ENCODE measurements at regions of chr2 and their contacts with region 1.

Region 1: DNA sequence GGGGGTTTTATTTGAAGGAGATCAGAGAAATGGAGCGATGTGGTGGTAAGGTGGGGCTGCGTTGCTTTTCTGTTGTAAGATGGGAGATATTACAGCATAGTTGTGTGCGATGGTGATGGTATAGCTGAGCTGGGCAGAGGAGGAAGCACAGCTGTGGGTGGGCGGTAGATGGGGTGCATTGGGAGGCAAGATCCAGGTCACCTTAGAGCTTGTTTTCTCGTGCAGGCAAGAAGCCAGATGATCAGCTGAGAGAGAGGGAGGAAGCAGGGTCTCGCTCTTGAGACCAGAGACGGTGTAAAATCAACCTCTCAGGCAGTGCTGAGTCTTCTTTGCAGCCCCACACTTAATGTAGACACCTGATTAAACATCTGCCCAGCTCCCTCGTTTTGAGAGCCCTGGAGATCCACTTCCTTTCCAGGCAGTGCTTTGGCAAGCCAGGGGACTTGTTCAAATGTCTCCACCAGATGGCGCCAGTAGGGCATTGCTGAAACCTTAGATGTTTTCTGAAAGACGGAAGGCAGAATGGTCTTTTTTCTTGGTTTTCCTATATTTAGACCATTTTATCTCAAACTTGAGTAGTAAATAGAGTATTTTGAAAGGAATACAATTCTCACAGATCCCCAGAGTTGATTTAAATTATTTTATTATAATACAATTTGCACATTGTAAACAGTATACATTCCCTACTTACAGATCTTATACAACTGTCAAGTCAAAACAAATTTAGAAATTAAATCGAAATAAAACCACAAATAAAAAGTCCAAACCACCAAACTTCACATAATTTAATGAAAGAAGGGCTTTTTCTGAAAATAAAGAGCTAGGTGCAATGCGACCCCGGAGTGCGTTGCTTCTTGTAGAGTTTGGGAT is 21.1 kb upstream of the LYPD6B start:
- DNase-seq: peak; percentile 80
- H3K4me3 Mint-ChIP-seq: no peak overlapping the region
- H3K27ac Mint-ChIP-seq: no peak overlapping the region
- H3K4me1 Mint-ChIP-seq: peaks cover 1% of the 10 kb centered on the region
- H3K27me3 Mint-ChIP-seq: no peaks in the 10 kb centered on the region

Region 2: GRCh38 chr2:149006883-149007540 is 10.3 kb before region 1 on chr2:
- CTCF ChIA-PET with region 1: interaction called, 25 read pairs
- POLR2A ChIA-PET with region 1: no interaction called
- intact Hi-C with region 1: no loop called
- DNase-seq: no peak
- H3K4me3 Mint-ChIP-seq: no peak overlapping the region
- H3K27ac Mint-ChIP-seq: no peak overlapping the region
- H3K4me1 Mint-ChIP-seq: no peaks in the 10 kb centered on the region
- H3K27me3 Mint-ChIP-seq: no peaks in the 10 kb centered on the region

Region 3: DNA sequence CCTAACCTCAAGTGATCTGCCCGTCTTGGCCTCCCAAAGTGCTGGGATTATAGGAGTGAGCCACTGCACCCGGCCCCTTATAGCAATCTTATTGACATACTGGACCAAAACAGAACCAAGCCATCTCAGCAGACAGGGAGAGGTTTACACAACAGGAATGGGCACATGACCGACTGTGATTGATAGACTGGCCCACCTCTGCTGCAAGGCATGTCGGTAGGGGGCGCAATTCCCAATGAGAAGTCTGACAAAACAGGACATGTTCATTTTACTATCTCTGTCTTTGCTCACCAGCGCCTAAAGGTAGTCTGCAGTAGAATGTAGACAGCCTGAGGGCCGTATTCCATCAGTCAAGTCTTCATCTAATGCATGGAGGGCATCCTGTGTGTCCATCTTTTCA is 23.1 kb after region 1 on chr2:
- CTCF ChIA-PET with region 1: interaction called, 17 read pairs
- POLR2A ChIA-PET with region 1: no interaction called
- intact Hi-C with region 1: no loop called
- DNase-seq: peak; percentile 74
- H3K4me3 Mint-ChIP-seq: no peak overlapping the region
- H3K27ac Mint-ChIP-seq: no peak overlapping the region
- H3K4me1 Mint-ChIP-seq: no peaks in the 10 kb centered on the region
- H3K27me3 Mint-ChIP-seq: peaks cover 37% of the 10 kb centered on the region

Region 4: DNA sequence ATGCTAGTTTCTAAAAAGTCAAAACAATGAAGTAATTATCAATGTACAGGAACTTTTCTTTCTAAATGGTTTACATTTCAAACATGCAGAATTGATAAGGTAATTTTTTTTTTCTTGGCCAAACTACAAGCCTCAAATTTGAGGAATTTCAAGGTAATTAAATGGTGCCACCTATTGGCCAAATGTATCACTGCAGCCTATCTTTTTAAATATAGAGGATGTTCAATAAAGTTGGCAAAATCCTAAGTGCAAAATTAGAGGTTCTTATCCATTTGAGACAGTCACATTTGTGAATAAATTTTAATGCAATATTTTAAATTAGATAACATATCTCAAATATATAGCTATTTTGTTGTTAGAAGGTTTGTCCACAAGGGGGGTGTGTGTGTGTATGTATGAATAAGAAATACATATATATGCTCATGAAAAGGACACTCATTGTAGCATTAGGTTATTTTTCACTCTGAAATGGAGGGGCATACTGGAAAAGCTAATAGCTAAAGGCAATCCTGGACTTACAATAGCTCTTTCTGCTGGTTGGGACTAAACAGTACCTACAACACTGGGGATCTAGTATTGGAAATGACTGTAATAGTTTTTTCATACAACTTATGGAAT is 544.1 kb after region 1 on chr2:
- CTCF ChIA-PET with region 1: interaction called, 93 read pairs
- POLR2A ChIA-PET with region 1: no interaction called
- intact Hi-C with region 1: loop called (anchors 1 kb)
- DNase-seq: no peak
- H3K4me3 Mint-ChIP-seq: no peak overlapping the region
- H3K27ac Mint-ChIP-seq: no peak overlapping the region
- H3K4me1 Mint-ChIP-seq: no peaks in the 10 kb centered on the region
- H3K27me3 Mint-ChIP-seq: no peaks in the 10 kb centered on the region